Activated CD4-positive, alpha-beta memory T cell treated with anti-CD3 and anti-CD28 coated beads, Interleukin-2, amount 10 ng/mL, durations not matched to agents 7 days and 5 days (primary cell): ENCODE measurements at regions of chr12 and their contacts with region 1.

Region 1: GRCh38 chr12:117119592-117120198 is 20.5 kb upstream of the TESC start:
- DNase-seq: peak; percentile 31
- H3K4me3 Mint-ChIP-seq: no peak overlapping the region
- H3K27ac Mint-ChIP-seq: no peak overlapping the region
- H3K4me1 Mint-ChIP-seq: no peaks in the 10 kb centered on the region
- H3K27me3 Mint-ChIP-seq: no peaks in the 10 kb centered on the region

Region 2: GRCh38 chr12:116703214-116703795 is 416.4 kb before region 1 on chr12:
- CTCF ChIA-PET with region 1: interaction called, 12 read pairs
- POLR2A ChIA-PET with region 1: interaction called, 3 read pairs
- DNase-seq: peak; percentile 71
- H3K4me3 Mint-ChIP-seq: no peak overlapping the region
- H3K27ac Mint-ChIP-seq: no peak overlapping the region
- H3K4me1 Mint-ChIP-seq: peaks cover 1% of the 10 kb centered on the region
- H3K27me3 Mint-ChIP-seq: peaks cover 4% of the 10 kb centered on the region

Region 3: DNA sequence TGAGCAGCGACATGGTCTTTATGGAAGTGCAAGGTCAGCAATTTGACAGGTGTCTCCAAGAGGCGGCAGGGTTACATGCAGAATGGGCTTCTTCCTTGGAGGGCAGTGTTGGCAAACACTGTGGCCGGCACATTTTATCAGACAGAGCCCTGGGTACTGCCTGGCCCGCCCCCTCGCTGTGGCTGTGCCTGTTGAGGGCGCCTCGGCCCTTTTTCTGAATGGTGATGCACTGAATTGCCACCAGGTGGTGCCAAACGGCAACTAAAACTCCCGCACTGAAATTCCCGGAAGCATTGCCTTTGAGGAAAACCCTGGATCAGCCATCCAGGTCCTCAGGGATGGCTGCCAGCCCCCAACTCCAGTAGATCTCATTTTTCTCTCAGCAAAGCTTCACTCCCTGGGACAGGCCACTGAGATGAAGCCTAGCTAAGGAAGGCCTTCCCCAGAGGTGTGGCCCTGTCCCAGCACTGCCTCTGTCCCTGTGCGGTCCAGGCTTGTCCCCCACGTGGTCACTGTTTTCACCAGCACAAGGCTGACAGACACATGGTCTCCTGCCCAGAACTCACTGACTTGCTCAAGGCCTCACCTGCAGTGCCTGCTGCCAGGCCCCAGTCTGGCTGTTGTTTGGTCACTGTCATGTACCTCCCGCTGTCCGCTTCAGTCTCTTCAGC is 94.1 kb before region 1 on chr12:
- CTCF ChIA-PET with region 1: interaction called, 97 read pairs
- POLR2A ChIA-PET with region 1: interaction called, 3 read pairs
- DNase-seq: peak; percentile 56
- H3K4me3 Mint-ChIP-seq: no peak overlapping the region
- H3K27ac Mint-ChIP-seq: no peak overlapping the region
- H3K4me1 Mint-ChIP-seq: peaks cover 3% of the 10 kb centered on the region
- H3K27me3 Mint-ChIP-seq: no peaks in the 10 kb centered on the region

Region 4: GRCh38 chr12:117089463-117089862 is 30.2 kb before region 1 on chr12:
- CTCF ChIA-PET with region 1: no interaction called
- POLR2A ChIA-PET with region 1: no interaction called
- DNase-seq: no peak
- H3K4me3 Mint-ChIP-seq: no peak overlapping the region
- H3K27ac Mint-ChIP-seq: no peak overlapping the region
- H3K4me1 Mint-ChIP-seq: no peaks in the 10 kb centered on the region
- H3K27me3 Mint-ChIP-seq: no peaks in the 10 kb centered on the region

Region 5: DNA sequence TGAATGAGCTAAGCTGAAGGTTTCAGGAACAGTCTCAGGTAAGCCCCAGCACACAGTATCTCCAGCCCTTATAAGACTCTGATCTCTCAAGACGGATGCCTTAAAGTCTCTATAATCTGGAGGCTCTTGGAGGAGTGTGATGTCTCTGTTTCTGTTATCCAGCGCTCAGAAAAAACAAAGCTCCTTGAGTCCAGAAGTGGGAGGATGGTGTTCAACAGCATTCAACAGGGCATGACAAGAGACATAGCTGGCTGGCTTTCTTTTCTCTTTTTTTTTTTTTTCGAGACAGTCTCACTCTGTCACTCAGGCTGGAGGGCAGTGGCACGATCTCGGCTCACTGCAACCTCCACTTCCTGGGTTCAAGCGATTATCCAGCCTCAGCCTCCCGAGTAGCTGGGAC is 11.1 kb after region 1 on chr12:
- CTCF ChIA-PET with region 1: interaction called, 10 read pairs
- POLR2A ChIA-PET with region 1: no interaction called
- DNase-seq: no peak
- H3K4me3 Mint-ChIP-seq: no peak overlapping the region
- H3K27ac Mint-ChIP-seq: no peak overlapping the region
- H3K4me1 Mint-ChIP-seq: peaks cover 15% of the 10 kb centered on the region
- H3K27me3 Mint-ChIP-seq: no peaks in the 10 kb centered on the region